ENCODE measurements at regions of chr12 and their contacts with region 1.

Region 1: DNA sequence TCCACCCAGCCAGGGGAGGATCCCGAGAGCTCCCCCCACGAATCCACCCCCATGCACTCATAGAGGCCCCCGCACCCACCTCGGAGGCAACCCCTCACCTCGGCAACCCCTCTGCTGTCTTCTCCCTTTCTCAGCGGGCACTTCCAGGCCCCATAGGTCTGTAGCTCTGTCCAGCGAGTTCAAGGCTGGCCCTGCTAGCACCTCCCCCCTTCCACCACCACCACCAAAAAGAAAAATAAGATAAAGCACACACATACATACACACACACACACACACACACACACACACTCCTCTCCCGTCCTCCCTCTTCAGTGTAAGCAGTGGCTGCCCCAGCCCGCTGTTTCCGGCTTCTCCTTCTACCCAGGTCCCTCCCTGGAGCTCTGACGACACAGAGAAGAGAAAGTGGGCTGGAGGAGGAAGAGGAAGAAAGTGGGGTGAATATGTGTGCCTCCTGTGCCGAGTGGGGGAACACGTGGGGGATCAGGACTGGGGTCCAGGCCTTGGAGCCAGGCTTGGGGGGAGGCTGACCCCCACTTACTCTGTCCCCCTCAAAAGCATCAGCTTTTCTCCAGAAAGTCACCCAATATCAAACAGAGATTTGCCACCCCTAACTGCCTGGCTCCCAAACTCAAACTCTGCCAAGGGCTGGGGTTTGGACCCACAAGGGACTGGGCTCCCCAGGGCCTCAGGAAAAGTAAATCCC is at the start of gene STAT6:
- DNase-seq: peak; percentile 84
- CTCF ChIP-seq: no peak

Region 2: DNA sequence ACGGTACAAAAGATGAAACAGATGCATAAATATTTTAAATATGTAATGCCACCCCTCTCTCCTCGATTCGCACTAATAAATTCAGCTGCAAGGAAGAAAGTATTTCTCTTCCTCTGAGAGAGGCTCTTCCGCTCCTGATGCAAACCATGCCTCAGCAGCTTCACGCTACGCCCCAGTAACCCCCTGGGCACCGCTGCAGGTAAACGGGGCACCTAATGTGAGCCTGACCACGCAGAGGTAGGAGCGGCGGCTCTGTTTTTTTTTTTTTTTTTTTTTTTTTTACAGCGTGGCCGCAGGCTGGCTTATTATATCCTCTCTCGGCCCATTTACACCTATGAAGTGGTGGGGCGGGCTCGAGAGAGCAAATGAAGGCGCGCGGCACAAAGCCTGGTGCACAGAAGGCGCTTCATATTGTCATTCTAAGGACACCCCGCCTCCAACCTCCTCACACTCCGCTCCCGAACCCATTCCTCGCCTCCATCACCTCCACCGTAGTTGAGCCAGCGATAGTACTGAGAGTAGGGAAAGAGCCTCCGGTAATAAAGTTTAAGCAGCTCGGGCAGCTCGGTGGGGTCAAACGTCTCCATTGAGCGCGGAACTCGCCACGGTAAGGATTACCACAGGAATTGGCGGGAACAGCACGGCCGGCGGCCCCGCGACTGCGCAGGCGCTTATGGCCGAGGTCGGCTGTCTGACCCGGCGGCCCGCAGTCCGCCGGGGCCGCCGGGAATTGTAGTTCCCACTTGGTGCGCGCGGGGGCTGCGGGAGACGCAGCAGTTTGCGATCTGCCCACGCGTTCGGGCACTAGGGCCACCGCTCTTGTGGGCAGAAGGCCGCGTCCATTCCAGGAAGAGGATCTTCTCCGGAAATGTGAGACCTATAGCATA is 359.2 kb before region 1 on chr12 and contains the start of gene PRIM1:
- in situ Hi-C with region 1: loop called (anchors 10 kb)
- DNase-seq: peak; percentile 95
- CTCF ChIP-seq: no peak

Region 3: GRCh38 chr12:57005980-57006808 is 105.0 kb before region 1 on chr12 and contains the start of gene ZBTB39:
- in situ Hi-C with region 1: loop called (anchors 5 kb)
- DNase-seq: peak; percentile 94
- CTCF ChIP-seq: peak; percentile 62

Region 4: GRCh38 chr12:57069523-57069922 is 41.7 kb before region 1 on chr12:
- in situ Hi-C with region 1: loop called (anchors 5 kb)
- DNase-seq: peak; percentile 62
- CTCF ChIP-seq: peak; percentile 74

Region 5: GRCh38 chr12:57205933-57206330 is 94.7 kb after region 1 on chr12:
- in situ Hi-C with region 1: no loop called
- DNase-seq: no peak
- CTCF ChIP-seq: no peak

Measured in GM13976 (cell line).